Gastrocnemius medialis (tissue), 4 donors: ENCODE measurements at regions of chr4 and their contacts with region 1.

Region 1: DNA sequence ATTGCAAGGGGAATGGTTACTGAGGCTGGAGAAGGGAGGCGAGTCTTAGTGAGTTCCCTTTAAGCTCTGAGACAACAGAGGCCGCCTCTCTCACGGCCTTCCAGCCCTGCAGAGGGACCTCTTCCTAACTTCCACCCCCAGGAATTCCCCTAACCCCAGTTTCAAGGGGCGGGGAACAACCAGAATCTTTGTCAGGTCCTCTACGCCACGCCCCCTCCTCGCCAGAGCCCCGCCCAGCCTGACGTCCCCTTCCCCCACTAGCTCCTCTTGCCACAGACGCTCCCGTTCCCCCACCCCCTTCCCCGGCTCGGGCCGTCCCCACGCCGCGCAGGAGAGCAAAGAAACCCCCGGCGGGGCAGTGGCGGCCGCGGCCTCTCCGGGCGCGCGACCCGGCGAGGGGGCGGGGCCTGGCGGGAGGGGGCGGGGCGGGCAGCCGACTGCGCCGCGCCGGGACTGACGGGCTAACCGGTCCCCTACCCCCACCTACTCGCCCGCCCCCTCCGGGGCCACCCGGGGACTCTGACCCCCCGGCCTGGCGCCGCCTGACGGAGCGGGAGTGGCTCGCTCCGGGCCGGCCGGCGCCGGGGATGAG is 12.3 kb upstream of the TMEM156 start:
- DNase-seq: peak; percentile 81 to 86
- ATAC-seq: peak; percentile 88 to 91
- H3K4me3 ChIP-seq: peak overlapping the region; percentile 50 to 72 (median 57)
- H3K27ac ChIP-seq: peak overlapping the region; percentile 68 to 87 (median 78)
- H3K4me1 ChIP-seq: peaks cover 6 to 17% of the 10 kb centered on the region in 2 donors
- H3K27me3 ChIP-seq: no peaks in the 10 kb centered on the region
- CTCF ChIP-seq: no peak
- POLR2A ChIP-seq: no peak

Region 2: DNA sequence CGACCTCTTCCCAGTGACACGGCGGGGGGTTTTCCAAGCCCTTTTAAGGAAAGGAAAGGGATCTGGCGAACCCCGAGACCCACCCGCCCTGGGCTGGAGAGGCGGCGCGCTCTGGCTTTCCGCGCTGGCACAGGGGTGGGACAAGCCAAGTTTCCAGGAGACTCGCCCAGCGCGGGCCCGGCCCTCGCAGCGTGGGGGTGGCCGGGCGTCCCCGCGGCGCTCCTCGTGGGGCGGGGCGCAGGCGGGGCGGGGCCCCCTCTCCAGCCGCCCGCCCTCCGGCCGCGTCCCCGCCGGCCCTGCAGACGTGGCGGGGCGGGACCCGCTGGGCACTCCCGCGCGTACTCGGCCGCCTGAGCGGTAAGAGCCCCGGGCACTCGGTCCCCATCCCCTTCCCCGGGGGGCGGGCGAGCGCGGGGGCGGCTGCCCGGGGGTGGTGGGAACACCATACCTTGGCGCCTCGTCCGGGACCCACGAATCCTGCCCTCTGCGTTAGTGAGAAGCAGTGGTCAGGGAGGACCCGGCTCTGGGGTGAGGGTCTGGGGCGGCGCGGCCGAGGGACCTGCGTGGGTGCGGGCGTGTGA is 176.9 kb before region 1 on chr4 and contains the start of gene FAM114A1:
- in situ Hi-C with region 1: no loop called
- intact Hi-C with region 1: loop called (anchors 2 kb)
- DNase-seq: peak; percentile 42 to 61
- ATAC-seq: peak; percentile 77 to 78
- H3K4me3 ChIP-seq: peak within 1 kb of the TSS; percentile 69 to 83 (median 75)
- H3K27ac ChIP-seq: peak within 1 kb of the TSS; percentile 78 to 89 (median 82)
- H3K4me1 ChIP-seq: peaks cover 19 to 23% of the 10 kb centered on the region in 2 donors
- H3K27me3 ChIP-seq: no peaks in the 10 kb centered on the region
- CTCF ChIP-seq: no peak
- POLR2A ChIP-seq: peak; percentile 45 to 47
- total RNA-seq, gene FAM114A1: 23.2 to 47.5 (median 27.4) TPM

Region 3: GRCh38 chr4:38948551-38948950 is 95.9 kb before region 1 on chr4:
- in situ Hi-C with region 1: no loop called
- intact Hi-C with region 1: loop called (anchors 5 kb)
- DNase-seq: peak; percentile 7 to 60
- ATAC-seq: peak; percentile 81 to 88
- H3K4me3 ChIP-seq: no peak overlapping the region
- H3K27ac ChIP-seq: no peak overlapping the region
- H3K4me1 ChIP-seq: peaks cover 0 to 5% of the 10 kb centered on the region in 2 donors
- H3K27me3 ChIP-seq: no peaks in the 10 kb centered on the region
- CTCF ChIP-seq: no peak
- POLR2A ChIP-seq: no peak

Region 4: DNA sequence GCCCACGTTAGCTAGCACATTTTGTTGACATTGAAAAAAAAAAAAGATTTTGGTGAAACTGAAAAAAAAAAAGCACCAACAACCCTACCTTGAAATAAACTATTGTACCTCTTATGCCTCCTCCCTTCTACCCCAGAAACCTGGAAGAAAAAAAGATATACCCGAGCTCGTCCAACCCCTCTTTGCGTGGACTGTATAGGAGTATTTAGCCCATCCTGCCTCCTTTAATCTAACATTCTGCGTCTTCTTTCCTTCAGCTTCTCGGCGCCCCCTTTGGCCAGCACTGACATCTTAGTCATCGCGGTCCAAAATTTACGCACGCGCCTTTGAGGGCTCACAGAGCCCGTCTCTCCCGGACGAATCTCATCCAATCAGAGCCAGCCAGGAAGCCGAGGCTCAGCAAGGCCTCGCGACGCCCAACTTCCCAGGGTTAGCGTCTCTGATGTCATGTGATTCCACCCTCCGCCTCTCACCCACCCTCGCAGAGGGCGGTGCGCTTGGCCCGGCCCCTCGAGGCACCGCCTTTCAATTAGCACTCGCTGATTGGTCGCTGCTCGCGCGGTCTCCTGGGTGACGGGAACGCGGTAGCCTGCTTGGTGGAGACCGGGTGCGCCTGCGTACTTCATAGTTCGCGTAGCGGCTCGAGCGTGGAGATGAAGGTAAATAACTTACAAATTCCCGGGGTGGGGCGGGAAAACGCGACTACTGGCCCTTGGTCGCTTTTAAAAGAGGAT is 137.6 kb after region 1 on chr4 and contains the start of gene WDR19:
- in situ Hi-C with region 1: loop called in 1 of 4 experiments (anchors 10 kb)
- intact Hi-C with region 1: loop called (anchors 2 kb)
- DNase-seq: peak; percentile 99
- ATAC-seq: peak; percentile 99 to 100
- H3K4me3 ChIP-seq: peak within 1 kb of the TSS; percentile 70 to 94 (median 74)
- H3K27ac ChIP-seq: peak within 1 kb of the TSS; percentile 81 to 87 (median 83)
- H3K4me1 ChIP-seq: peaks cover 9 to 16% of the 10 kb centered on the region in 2 donors
- H3K27me3 ChIP-seq: no peaks in the 10 kb centered on the region
- CTCF ChIP-seq: peak in 3 of 5 experiments; percentile 12 to 58 (median 45)
- POLR2A ChIP-seq: peak; percentile 45 to 59
- total RNA-seq, gene WDR19: 6.1 to 16.2 (median 9.6) TPM